ENCODE measurements at regions of chr12 and their contacts with region 1.

Region 1: GRCh38 chr12:49232940-49233841 is 31.7 kb upstream of the TUBA1C start:
- DNase-seq: peak; percentile 68
- ATAC-seq: peak; percentile 46 to 51

Region 2: DNA sequence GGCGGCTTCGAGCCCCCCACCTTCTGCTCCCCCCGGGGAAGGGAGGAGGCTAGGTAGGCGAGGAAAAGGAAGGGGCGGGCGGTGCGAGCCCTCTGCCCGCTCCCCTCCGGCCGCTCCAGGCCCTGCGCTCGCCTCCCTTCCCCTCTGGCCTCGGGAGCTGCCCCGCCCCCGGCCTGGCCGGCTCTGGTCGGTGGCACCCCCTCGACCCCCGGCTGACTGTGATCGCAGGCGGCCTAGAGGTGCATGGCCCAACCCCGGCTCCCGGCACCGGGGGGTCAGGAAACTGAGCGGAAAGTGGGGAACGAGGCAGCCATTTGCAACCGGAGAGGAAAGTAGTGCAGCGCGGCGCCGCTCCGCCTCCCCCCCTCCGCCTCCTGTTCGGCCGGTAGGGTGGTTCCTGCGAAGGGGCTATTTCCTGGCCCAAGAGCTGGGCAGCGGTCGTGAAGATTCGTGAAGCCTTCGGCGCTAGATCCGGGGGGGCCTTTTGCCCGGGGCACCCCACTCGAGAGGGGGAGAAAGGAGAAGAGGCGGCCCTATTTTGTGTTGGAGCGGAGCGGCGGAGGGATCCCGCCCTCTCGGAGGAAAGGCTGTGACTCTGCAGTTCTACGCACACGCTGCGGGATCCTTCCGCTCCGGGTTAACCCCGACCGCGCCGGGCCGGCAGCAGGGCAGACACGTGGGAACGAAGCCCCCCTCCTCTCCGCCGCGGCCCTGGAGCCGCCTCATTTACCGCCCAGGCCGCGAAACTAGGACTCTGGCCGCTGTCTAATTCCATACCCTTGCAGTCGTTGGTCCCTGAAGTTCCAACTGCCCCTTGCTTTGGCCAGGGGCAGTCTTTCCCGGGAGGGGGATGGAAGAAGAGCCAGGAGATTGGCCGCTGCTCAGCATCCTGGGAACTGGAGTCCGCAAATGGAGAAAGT is 172.7 kb before region 1 on chr12 and contains the start of gene KMT2D:
- intact Hi-C with region 1: loop called in 1 of 2 experiments (anchors 5 kb)
- DNase-seq: peak; percentile 94
- ATAC-seq: peak; percentile 84 to 86
- total RNA-seq, gene KMT2D: 44.1 to 47.4 TPM

Region 3: GRCh38 chr12:49088190-49088931 is 144.8 kb before region 1 on chr12:
- intact Hi-C with region 1: loop called (anchors 2 to 10 kb)
- DNase-seq: peak; percentile 80
- ATAC-seq: peak; percentile 88 to 95

Region 4: DNA sequence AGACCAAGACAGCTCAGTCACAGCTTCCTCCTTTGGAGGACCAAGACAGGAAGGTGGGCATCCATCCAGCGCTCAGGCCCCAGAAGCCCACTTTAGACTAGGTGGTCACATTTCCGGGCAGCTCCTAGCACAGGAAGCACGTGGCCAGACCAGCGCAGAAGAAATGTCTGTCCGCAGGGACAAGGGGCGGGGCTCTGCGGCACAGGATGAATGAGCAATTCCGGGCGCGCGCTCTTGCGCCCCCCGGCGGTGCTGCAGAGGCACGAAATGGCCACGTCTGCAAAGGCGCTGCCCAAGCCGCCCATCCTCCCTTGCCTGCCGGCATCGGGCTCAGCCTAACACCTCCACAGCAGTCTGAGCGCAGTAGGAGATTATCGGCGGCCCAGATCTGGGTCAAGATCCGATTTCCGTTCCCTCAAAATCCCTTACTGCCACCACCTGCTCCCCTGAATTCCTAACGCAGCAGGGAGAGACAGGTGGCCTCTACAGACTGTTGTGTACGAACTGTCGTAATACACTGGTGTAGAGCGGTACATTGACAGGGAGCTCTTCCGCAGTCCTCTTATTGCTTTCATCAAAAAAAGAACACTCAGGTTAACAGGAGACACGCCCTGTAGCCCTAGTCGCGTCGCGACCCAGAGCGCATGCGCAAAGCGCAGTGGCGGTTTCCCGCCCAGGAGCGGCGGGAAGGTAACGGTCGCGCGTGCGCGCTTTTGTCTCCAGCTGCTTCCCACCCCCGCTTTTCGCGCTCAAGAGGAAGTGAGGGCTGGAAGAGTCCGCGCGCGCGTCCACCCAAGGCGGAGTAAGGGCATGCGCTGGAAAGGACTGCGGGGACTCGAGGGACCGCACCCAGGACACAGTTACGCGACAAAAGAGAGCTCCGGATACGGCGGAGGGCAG is 102.8 kb before region 1 on chr12:
- intact Hi-C with region 1: loop called in 1 of 2 experiments (anchors 2 kb)
- DNase-seq: peak; percentile 97
- ATAC-seq: peak; percentile 83 to 88

Region 5: GRCh38 chr12:49188914-49189367 is 44.2 kb before region 1 on chr12 and contains the start of gene TUBA1A:
- intact Hi-C with region 1: loop called (anchors 2 to 10 kb)
- DNase-seq: peak; percentile 93
- ATAC-seq: peak; percentile 93 to 95
- total RNA-seq, gene TUBA1A: 119 to 134 TPM